Ovary (tissue), 10 donors: ENCODE measurements at regions of chr17 and their contacts with region 1.

Region 1: DNA sequence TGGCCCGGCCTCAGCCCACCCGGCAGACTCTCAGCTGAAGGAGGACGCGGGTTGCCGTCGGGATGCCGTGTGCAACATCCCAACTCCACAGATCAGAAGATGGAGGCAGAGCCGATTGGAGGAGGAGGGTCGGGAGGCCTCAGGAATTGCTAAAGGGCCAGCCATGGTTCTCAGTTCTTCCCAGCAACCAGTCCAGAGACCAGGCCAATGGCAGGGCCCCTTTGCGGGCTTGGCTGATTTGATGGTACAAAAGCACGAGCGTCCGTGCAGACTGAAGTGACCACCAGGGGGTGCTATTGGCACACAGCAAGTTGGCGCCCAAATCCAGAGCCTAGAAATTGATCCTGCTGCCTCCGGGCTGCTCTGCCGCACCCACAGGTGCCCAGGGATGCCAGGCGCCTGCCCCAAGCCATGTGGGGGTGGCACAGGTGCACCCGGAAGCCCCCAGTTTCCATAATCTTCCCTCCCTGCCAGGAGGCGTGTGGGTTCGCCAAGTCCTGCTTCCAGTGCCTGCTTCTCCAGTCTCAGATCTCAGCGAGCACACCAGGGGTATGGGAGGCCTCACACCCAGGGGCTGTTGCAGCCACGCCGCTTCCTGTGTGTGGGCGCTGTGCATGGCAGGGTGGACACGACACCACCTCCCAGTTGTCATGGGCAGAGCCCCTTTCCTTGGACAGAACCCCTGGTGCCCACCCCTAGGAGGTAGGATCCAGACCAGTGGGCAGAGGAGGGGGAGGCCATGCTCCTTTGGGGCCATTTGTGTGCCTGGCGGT is 7.1 kb upstream of the TEX19 start:
- DNase-seq: peak; percentile 76 to 89 (median 86)
- H3K4me3 ChIP-seq: no peak overlapping the region
- H3K27ac ChIP-seq: no peak overlapping the region
- H3K4me1 ChIP-seq: peaks cover 3% of the 10 kb centered on the region
- H3K27me3 ChIP-seq: no peaks in the 10 kb centered on the region
- CTCF ChIP-seq: peak; percentile 85 to 98 (median 91)
- EP300 ChIP-seq: no peak
- POLR2A ChIP-seq: no peak

Region 2: GRCh38 chr17:82267575-82268379 is 84.1 kb before region 1 on chr17:
- intact Hi-C with region 1: no loop called
- DNase-seq: peak; percentile 80 to 87 (median 81)
- H3K4me3 ChIP-seq: peak overlapping the region; percentile 22
- H3K27ac ChIP-seq: peak overlapping the region in 1 of 2 donors; percentile 60
- H3K4me1 ChIP-seq: peaks cover 19% of the 10 kb centered on the region
- H3K27me3 ChIP-seq: no peaks in the 10 kb centered on the region
- CTCF ChIP-seq: no peak
- EP300 ChIP-seq: no peak
- POLR2A ChIP-seq: no peak

Region 3: DNA sequence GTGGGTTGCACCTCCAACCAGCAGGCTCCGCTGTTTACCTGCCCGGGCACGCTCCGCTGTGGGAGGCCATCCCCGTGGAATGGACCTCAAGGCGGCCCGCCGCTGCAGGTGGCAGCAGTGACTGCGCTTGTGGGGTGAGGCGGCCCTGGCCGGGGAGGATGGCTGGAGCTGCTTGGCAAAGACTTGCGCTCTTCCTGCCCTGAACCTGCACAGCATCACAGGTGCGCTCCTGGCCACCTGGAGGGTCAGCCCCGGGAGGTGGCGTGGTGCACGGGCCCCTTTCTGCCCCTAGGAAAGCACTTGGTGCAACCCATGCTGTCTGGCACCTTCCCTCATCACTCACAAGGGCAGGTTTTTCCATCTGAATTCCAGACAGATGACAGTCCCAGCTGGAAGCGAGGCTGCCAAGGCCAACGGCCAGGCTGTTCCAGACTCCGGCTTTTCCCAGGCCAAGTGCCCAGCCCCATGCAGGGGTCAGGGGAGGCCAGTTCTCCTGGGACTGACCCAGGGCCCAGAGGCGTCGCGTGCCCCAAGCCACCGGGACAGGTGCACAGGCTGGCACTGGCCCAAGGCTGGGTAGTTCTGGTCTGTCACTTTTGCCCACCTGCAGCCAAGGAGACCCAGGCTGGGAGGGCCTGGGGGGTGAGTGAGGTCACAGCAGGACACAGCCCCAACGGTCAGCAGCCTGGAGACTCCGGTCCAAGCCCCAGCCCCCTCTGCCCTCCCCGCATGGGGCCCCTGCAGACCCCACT is 33.0 kb after region 1 on chr17:
- intact Hi-C with region 1: no loop called
- DNase-seq: peak in 1 of 5 donors; percentile 38
- H3K4me3 ChIP-seq: no peak overlapping the region
- H3K27ac ChIP-seq: no peak overlapping the region
- H3K4me1 ChIP-seq: peaks cover 1% of the 10 kb centered on the region
- H3K27me3 ChIP-seq: no peaks in the 10 kb centered on the region
- CTCF ChIP-seq: no peak
- EP300 ChIP-seq: no peak
- POLR2A ChIP-seq: no peak

Region 4: DNA sequence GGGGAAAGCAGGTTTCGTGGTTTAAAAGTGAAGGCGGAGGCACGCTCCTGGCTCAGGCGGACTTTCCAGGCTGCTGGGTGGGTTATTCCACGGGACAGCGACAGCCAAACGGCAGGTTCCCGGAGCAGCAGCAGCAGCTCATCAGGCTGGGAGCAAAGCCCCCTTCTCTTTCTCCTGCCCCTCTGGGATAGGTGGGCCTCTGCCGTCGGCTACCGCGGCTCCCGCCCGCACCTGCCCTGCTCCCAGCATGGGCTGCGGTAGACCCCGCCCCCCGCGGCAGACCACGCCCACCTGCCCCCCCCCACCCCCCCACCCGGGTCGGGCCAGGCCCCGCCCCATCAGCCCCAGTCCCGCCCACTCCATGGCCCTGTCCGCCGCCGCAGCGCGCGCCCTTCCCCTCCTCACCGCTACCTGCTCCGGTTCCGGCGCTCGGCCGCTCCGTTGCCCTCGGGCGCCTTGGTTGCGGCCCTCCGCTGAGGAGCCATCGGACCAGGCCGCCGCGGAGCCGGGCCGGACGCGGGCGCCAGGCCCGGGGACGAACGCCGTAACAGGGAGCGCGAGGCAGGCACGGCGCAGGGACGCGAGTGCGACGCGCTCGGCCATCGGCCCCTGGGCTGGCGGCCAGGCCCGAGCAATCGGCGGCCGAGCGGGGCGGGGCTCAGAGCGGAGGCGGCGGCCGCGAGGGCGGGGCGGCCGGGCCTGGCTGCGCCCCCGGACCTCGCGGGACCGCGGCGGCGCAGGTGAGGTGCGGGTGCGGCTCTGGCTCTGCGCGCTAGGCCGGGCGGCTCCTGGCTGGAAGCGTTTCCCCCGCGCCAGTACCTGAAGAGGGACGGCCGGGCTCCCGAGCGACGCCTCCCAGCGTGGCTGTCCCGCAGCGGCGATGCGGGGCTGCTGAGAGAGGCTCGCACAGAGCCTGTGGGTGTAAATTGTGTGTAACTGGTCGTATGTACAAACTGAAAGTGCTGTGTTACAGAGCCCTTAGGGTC is 66.4 kb after region 1 on chr17 and contains the starts of genes HEXD and OGFOD3:
- intact Hi-C with region 1: loop called in 2 of 4 experiments (anchors 5 to 10 kb)
- DNase-seq: peak; percentile 82 to 90 (median 87)
- H3K4me3 ChIP-seq: peak within 1 kb of the TSS; percentile 65
- H3K27ac ChIP-seq: peak within 1 kb of the TSS; percentile 84 to 90
- H3K4me1 ChIP-seq: peaks cover 8% of the 10 kb centered on the region
- H3K27me3 ChIP-seq: no peaks in the 10 kb centered on the region
- CTCF ChIP-seq: peak in 2 of 3 donors; percentile 30 to 41
- EP300 ChIP-seq: no peak
- POLR2A ChIP-seq: peak; percentile 85
- total RNA-seq, gene HEXD: 32.9 to 68.6 (median 46.6) TPM
- total RNA-seq, gene OGFOD3: 25.8 to 37.8 (median 30.4) TPM

Region 5: GRCh38 chr17:82465023-82465603 is 113.2 kb after region 1 on chr17:
- intact Hi-C with region 1: no loop called
- DNase-seq: no peak
- H3K4me3 ChIP-seq: no peak overlapping the region
- H3K27ac ChIP-seq: no peak overlapping the region
- H3K4me1 ChIP-seq: no peaks in the 10 kb centered on the region
- H3K27me3 ChIP-seq: no peaks in the 10 kb centered on the region
- CTCF ChIP-seq: no peak
- EP300 ChIP-seq: no peak
- POLR2A ChIP-seq: no peak

Region 6: DNA sequence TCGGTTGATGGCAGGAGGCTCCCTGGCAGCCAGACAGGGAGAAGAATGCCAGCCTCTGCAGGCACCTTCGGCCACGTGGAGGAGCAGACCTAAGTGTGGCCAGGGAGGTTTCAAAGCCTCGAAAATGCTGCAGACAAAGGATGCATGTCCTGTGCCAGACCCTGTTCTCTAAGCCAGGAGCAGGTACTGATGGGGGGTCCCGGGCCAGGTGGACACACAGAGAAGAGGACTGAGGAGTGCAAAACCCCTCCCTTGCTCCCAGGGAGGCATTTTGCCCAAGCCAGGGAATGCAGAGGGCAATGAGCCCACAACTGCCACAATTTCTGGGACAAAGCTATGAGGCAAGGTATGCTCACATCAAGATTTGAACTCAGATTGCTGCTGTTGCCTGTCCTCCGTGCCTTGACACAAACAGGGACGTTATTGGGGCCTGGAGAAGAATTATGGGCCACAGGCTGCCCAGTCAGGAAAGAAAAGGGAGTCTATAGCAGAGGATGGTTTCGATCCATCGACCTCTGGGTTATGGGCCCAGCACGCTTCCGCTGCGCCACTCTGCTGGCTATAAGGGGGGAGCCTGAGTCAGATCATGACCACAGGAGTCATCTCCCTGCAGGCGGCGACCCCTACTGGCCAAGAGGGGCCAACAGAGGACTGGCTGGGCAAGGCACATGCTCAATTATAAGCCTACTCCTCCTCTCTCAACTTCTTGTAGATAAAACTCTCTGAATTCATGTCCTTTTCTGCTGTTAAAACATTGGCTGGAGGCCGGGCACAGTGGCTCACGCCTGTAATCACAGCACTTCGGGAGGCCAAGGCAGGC is 142.5 kb after region 1 on chr17:
- intact Hi-C with region 1: loop called in 1 of 4 experiments (anchors 10 kb)
- DNase-seq: peak; percentile 91 to 95 (median 93)
- H3K4me3 ChIP-seq: no peak overlapping the region
- H3K27ac ChIP-seq: peak overlapping the region in 1 of 2 donors; percentile 29
- H3K4me1 ChIP-seq: peaks cover 3% of the 10 kb centered on the region
- H3K27me3 ChIP-seq: no peaks in the 10 kb centered on the region
- CTCF ChIP-seq: peak; percentile 79 to 91 (median 91)
- EP300 ChIP-seq: no peak
- POLR2A ChIP-seq: peak; percentile 20

Region 7: GRCh38 chr17:82551779-82552457 is 200.0 kb after region 1 on chr17:
- intact Hi-C with region 1: loop called (anchors 2 to 10 kb)
- DNase-seq: peak; percentile 72 to 85 (median 78)
- H3K4me3 ChIP-seq: no peak overlapping the region
- H3K27ac ChIP-seq: no peak overlapping the region
- H3K4me1 ChIP-seq: peaks cover 14% of the 10 kb centered on the region
- H3K27me3 ChIP-seq: no peaks in the 10 kb centered on the region
- CTCF ChIP-seq: peak; percentile 65 to 82 (median 81)
- EP300 ChIP-seq: no peak
- POLR2A ChIP-seq: no peak

Region 8: GRCh38 chr17:82767041-82767754 is 415.3 kb after region 1 on chr17:
- intact Hi-C with region 1: loop called in 3 of 4 experiments (anchors 5 to 10 kb)
- DNase-seq: peak in 1 of 5 donors; percentile 48
- H3K4me3 ChIP-seq: no peak overlapping the region
- H3K27ac ChIP-seq: no peak overlapping the region
- H3K4me1 ChIP-seq: peaks cover 1% of the 10 kb centered on the region
- H3K27me3 ChIP-seq: no peaks in the 10 kb centered on the region
- CTCF ChIP-seq: no peak
- EP300 ChIP-seq: no peak
- POLR2A ChIP-seq: no peak

Region 9: GRCh38 chr17:82775001-82775823 is 423.3 kb after region 1 on chr17:
- intact Hi-C with region 1: loop called in 3 of 4 experiments (anchors 2 to 10 kb)
- DNase-seq: peak; percentile 69 to 85 (median 79)
- H3K4me3 ChIP-seq: no peak overlapping the region
- H3K27ac ChIP-seq: no peak overlapping the region
- H3K4me1 ChIP-seq: no peaks in the 10 kb centered on the region
- H3K27me3 ChIP-seq: no peaks in the 10 kb centered on the region
- CTCF ChIP-seq: peak; percentile 77 to 94 (median 81)
- EP300 ChIP-seq: no peak
- POLR2A ChIP-seq: no peak